ENCODE measurements at regions of chr13 and their contacts with region 1.

Region 1: DNA sequence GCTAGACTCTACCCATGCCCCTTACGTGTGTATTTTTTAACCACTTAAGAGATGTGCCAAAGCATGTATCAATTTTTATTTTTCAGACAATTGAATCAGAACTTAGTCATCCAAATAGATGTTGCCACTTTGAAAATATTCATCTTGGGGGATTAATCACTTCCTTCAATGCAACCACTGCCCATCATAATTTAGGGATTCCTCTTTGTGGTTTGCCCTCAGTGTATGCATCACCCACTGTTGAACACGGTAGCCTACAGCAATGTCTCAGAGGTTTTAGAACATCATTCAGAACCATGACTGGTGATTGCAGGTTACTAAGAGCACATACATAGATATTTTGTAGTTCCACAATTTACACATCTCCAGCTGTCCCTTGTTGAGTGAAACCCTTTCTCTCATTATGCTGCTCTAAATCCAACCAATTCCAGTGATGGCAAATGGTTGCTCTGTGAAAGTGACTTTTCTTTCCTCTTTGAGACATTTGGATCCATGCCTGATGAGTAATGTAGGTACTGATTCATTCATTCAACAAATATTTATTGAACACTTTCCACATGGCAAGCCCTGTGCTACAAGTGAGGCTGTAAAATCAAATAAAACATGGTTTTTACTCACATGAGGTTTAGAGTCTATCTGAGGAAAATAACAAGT is 60.6 kb upstream of the SERP2 start:
- DNase-seq: no peak

Region 2: DNA sequence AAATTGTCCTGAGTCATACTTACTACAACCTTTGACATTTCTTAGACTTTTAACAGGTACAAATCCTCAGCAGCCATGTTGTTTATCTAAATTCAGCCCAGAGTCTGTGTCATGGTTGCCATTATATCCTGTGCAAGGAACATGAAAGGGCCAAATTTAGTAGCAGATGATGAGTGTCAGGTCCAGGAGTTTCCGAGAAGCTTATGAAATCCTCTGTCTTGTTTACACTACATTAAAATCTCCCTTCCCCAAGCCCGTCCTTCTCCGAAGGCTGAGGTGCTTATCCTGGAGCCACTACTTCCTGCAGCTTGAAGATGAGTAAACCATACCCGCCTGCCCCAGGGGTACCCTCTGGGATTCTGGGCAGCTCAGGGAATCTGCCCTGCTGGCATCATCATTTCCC is 42.0 kb before region 1 on chr13:
- intact Hi-C with region 1: loop called (anchors 2 kb)
- DNase-seq: no peak

Region 3: GRCh38 chr13:44364348-44365049 is 51.5 kb after region 1 on chr13:
- intact Hi-C with region 1: loop called (anchors 5 kb)
- DNase-seq: no peak

Measured in cardiac septum (tissue), 1 donor.